ENCODE measurements at regions of chr13 and their contacts with region 1.

Region 1: GRCh38 chr13:45826731-45827130 is 24.8 kb downstream of the SIAH3 start:
- DNase-seq: no peak
- ATAC-seq: no peak

Region 2: DNA sequence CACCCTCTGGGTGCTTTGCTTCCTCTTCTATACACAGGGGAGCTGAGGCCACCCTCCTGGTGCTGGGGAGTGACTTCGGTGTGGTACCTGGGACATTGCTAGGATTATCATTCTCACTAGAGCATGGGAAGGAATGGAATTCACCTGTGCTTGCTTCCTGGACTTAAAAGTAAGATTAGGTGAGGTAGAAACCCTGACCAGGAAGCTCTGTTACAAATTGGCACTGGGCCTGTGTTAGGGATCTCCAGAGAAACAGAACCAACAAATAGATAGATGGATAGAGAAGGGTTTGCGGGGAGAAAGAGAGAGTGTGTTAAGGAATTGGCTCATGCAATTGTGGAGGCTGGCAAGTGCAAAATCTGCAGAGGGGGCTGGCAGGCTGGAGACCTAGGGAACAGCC is 38.7 kb after region 1 on chr13:
- intact Hi-C with region 1: loop called (anchors 5 kb)
- DNase-seq: no peak
- ATAC-seq: no peak

Measured in Right ventricle myocardium inferior (tissue), 1 donor.